ENCODE measurements at regions of chr1 and their contacts with region 1.

Region 1: GRCh38 chr1:177710696-177711620 is 258.9 kb downstream of the SEC16B start:
- DNase-seq: no peak

Region 2: DNA sequence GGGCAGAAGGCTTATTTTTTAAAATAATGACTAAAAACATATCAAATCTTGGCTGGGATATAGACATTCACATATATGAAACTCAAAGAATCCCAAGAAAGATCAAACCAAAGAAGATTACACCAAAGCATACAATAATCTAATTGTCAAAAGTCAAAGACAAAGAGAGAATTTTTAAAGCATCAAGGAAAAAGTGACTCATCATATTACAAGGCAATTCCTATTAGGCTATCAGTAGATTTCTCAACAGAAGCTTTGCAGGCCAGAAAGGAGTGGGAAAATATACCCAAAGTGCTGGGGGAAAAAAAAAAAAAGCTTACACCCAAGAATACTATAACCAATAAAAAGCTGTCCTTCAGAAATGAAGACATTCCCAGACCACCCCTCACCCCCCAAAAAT is 164.6 kb before region 1 on chr1:
- intact Hi-C with region 1: loop called in 1 of 2 experiments (anchors 5 kb)
- DNase-seq: no peak

Measured in posterior vena cava (tissue), 2 donors.